ENCODE measurements at regions of chr4 and their contacts with region 1.

Region 1: GRCh38 chr4:182189103-182189878 is 53.9 kb upstream of the TENM3 start:
- DNase-seq: peak; percentile 94
- H3K4me3 Mint-ChIP-seq: no peak overlapping the region
- H3K27ac Mint-ChIP-seq: peak overlapping the region; percentile 31
- H3K4me1 Mint-ChIP-seq: peaks cover 29% of the 10 kb centered on the region
- H3K27me3 Mint-ChIP-seq: no peaks in the 10 kb centered on the region
- CTCF ChIP-seq: no peak

Region 2: GRCh38 chr4:182169987-182170386 is 19.3 kb before region 1 on chr4:
- CTCF ChIA-PET with region 1: interaction called, 3 read pairs
- POLR2A ChIA-PET with region 1: interaction called, 10 read pairs
- intact Hi-C with region 1: no loop called
- DNase-seq: no peak
- H3K4me3 Mint-ChIP-seq: no peak overlapping the region
- H3K27ac Mint-ChIP-seq: no peak overlapping the region
- H3K4me1 Mint-ChIP-seq: no peaks in the 10 kb centered on the region
- H3K27me3 Mint-ChIP-seq: no peaks in the 10 kb centered on the region
- CTCF ChIP-seq: no peak

Region 3: GRCh38 chr4:182179105-182179504 is 10.2 kb before region 1 on chr4:
- CTCF ChIA-PET with region 1: interaction called, 7 read pairs
- POLR2A ChIA-PET with region 1: interaction called, 11 read pairs
- intact Hi-C with region 1: no loop called
- DNase-seq: peak; percentile 66
- H3K4me3 Mint-ChIP-seq: no peak overlapping the region
- H3K27ac Mint-ChIP-seq: peak overlapping the region; percentile 51
- H3K4me1 Mint-ChIP-seq: no peaks in the 10 kb centered on the region
- H3K27me3 Mint-ChIP-seq: no peaks in the 10 kb centered on the region
- CTCF ChIP-seq: no peak

Region 4: DNA sequence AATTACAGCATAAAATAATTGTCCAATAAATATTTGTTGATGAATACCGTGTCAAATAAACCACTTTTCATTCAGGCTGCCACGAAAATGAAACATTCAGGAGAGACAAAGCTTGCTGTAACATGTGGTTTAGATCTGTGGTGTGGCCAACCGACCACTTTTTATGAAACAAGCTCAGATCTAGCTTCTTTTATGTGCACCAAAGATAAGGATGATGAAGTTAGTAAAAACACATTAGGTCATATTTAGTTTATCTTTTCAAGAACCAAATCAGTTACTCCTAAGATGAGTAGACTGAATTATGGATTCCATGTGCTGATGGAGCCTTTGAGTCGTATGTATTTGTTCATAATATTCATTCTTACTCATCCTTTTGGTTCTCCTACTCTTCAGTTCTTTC is 1751.6 kb after region 1 on chr4:
- CTCF ChIA-PET with region 1: no interaction called
- POLR2A ChIA-PET with region 1: no interaction called
- intact Hi-C with region 1: no loop called
- DNase-seq: no peak
- H3K4me3 Mint-ChIP-seq: no peak overlapping the region
- H3K27ac Mint-ChIP-seq: no peak overlapping the region
- H3K4me1 Mint-ChIP-seq: peaks cover 5% of the 10 kb centered on the region
- H3K27me3 Mint-ChIP-seq: no peaks in the 10 kb centered on the region
- CTCF ChIP-seq: no peak